BJ (cell line): ENCODE measurements at regions of chr12 and their contacts with region 1.

Region 1: GRCh38 chr12:119780786-119781434 is 96.2 kb downstream of the CIT start:
- DNase-seq: no peak
- H3K4me3 ChIP-seq: peak overlapping the region; percentile 33
- H3K27me3 ChIP-seq: no peaks in the 10 kb centered on the region
- CTCF ChIP-seq: peak; percentile 84

Region 2: GRCh38 chr12:119667577-119668323 is 113.2 kb before region 1 on chr12 and contains the start of gene PRKAB1:
- CTCF ChIA-PET with region 1: interaction called, 25 read pairs
- POLR2A ChIA-PET with region 1: no interaction called
- DNase-seq: peak; percentile 83
- H3K4me3 ChIP-seq: peak within 1 kb of the TSS; percentile 85
- H3K27me3 ChIP-seq: peaks cover 1% of the 10 kb centered on the region; the same call in 1 of the 2 replicates
- CTCF ChIP-seq: peak; percentile 80
- polyA plus RNA-seq, gene PRKAB1: 34.6 and 45.7 TPM in 2 replicates

Region 3: GRCh38 chr12:119735079-119735478 is 45.8 kb before region 1 on chr12:
- CTCF ChIA-PET with region 1: no interaction called
- POLR2A ChIA-PET with region 1: no interaction called
- DNase-seq: no peak
- H3K4me3 ChIP-seq: no peak overlapping the region
- H3K27me3 ChIP-seq: no peaks in the 10 kb centered on the region
- CTCF ChIP-seq: no peak

Region 4: GRCh38 chr12:119751961-119752360 is 28.9 kb before region 1 on chr12:
- CTCF ChIA-PET with region 1: interaction called, 15 read pairs
- POLR2A ChIA-PET with region 1: no interaction called
- DNase-seq: no peak
- H3K4me3 ChIP-seq: no peak overlapping the region
- H3K27me3 ChIP-seq: no peaks in the 10 kb centered on the region
- CTCF ChIP-seq: no peak

Region 5: GRCh38 chr12:119804011-119804641 is 23.2 kb after region 1 on chr12:
- CTCF ChIA-PET with region 1: interaction called, 38 read pairs
- POLR2A ChIA-PET with region 1: no interaction called
- DNase-seq: no peak
- H3K4me3 ChIP-seq: peak overlapping the region; percentile 49
- H3K27me3 ChIP-seq: no peaks in the 10 kb centered on the region
- CTCF ChIP-seq: peak; percentile 56

Region 6: GRCh38 chr12:119825262-119825985 is 44.5 kb after region 1 on chr12:
- CTCF ChIA-PET with region 1: no interaction called
- POLR2A ChIA-PET with region 1: no interaction called
- DNase-seq: no peak
- H3K4me3 ChIP-seq: no peak overlapping the region
- H3K27me3 ChIP-seq: no peaks in the 10 kb centered on the region
- CTCF ChIP-seq: no peak